ENCODE measurements at regions of chr13 and their contacts with region 1.

Region 1: DNA sequence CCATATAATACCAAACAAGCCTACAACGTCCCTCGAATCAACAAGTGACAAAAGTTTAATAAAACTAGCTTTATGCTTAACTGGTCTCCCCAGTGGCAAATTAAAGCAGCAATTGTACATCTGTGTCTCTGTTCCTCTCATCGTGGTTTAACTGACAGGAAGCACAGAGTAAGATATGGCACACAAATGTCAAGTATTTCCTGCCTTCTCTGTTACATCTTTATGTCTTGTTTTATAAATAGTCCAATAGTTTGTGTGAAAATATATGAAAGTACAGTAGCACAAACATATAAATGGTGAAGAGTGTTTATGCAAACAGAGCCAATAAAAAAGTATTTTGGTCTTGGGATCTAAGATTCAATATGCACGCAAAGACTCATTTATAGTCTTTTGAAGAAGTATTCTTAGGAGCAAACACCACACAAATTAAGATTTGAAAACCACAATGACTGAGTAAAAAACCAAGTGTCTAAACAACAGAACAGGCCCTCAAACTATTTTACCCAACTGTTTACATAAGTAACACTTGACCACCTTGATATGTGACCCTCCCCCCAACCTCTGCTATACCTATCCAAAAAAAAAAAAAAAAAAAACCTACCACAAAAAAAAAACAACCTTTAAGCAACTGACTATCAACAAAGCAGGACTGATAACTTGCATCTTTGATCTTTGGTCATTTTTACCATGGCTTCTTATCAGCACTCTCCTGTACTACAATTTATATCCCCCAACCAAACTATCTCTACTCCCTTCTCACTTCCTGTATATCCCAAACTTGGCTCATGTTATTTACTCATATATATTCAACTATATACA is 14.0 kb downstream of the ELF1 start:
- DNase-seq: peak; percentile 51
- ATAC-seq: peak; percentile 78
- H3K4me3 Mint-ChIP-seq: peak overlapping the region; percentile 52
- H3K27ac Mint-ChIP-seq: peak overlapping the region; percentile 96
- H3K4me1 Mint-ChIP-seq: peaks cover 69% of the 10 kb centered on the region
- H3K27me3 Mint-ChIP-seq: no peaks in the 10 kb centered on the region

Region 2: GRCh38 chr13:40798380-40798779 is 206.7 kb before region 1 on chr13:
- CTCF ChIA-PET with region 1: no interaction called
- DNase-seq: no peak
- ATAC-seq: peak; percentile 61
- H3K4me3 Mint-ChIP-seq: no peak overlapping the region
- H3K27ac Mint-ChIP-seq: peak overlapping the region; percentile 66
- H3K4me1 Mint-ChIP-seq: peaks cover 4% of the 10 kb centered on the region
- H3K27me3 Mint-ChIP-seq: no peaks in the 10 kb centered on the region

Region 3: GRCh38 chr13:40922437-40923040 is 82.5 kb before region 1 on chr13:
- CTCF ChIA-PET with region 1: no interaction called
- DNase-seq: no peak
- ATAC-seq: no peak
- H3K4me3 Mint-ChIP-seq: no peak overlapping the region
- H3K27ac Mint-ChIP-seq: peak overlapping the region; percentile 70
- H3K4me1 Mint-ChIP-seq: peaks cover 16% of the 10 kb centered on the region
- H3K27me3 Mint-ChIP-seq: no peaks in the 10 kb centered on the region

Region 4: GRCh38 chr13:40984668-40985366 is 20.3 kb before region 1 on chr13:
- CTCF ChIA-PET with region 1: interaction called, 12 read pairs
- DNase-seq: no peak
- ATAC-seq: peak; percentile 65
- H3K4me3 Mint-ChIP-seq: peak overlapping the region; percentile 96
- H3K27ac Mint-ChIP-seq: peak overlapping the region; percentile 93
- H3K4me1 Mint-ChIP-seq: peaks cover 46% of the 10 kb centered on the region
- H3K27me3 Mint-ChIP-seq: no peaks in the 10 kb centered on the region

Region 5: DNA sequence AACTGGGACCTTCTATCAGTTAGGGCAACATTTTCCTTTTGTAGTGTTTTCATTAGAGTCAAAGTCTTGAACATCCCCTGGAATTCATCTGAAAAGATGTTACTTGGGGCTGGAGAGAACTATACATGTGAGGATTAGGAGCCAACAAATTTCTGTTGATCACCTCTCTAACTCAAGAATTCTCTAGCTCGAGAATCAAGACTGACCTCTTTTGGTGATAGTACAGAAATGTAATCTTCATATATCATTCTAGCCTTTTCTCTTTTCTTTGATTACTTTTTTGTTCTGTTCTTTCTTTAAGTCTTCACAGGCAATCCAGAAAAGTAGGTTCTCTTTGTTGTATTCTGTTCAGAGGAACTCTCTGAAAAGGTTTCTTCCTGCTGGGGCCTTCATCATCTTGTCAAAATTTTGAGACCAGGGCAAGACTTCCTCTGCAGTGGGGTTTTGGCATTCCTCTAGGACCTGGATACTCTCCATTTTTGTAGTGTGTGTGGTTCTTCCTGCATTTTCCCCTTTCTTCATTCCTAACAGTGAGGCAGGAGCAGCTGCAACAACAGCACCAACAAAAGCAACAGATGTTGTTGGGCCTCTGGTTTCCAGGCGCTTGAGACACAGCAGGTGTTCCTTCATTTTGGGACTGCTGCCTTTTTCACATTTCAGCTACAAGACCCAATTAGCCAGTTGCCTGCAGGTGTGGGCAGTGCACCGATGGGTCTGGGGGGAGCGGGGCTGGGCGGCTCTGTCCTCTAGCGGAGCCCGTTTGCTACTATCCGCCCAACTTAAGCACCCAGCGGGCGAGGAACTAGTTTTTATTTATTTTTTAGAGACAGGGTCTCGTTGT is 12.2 kb before region 1 on chr13:
- CTCF ChIA-PET with region 1: interaction called, 13 read pairs
- DNase-seq: no peak
- ATAC-seq: peak; percentile 34
- H3K4me3 Mint-ChIP-seq: no peak overlapping the region
- H3K27ac Mint-ChIP-seq: peak overlapping the region; percentile 85
- H3K4me1 Mint-ChIP-seq: peaks cover 75% of the 10 kb centered on the region
- H3K27me3 Mint-ChIP-seq: no peaks in the 10 kb centered on the region

Region 6: GRCh38 chr13:41200126-41200525 is 195.0 kb after region 1 on chr13:
- CTCF ChIA-PET with region 1: no interaction called
- DNase-seq: no peak
- ATAC-seq: no peak
- H3K4me3 Mint-ChIP-seq: no peak overlapping the region
- H3K27ac Mint-ChIP-seq: no peak overlapping the region
- H3K4me1 Mint-ChIP-seq: peaks cover 14% of the 10 kb centered on the region
- H3K27me3 Mint-ChIP-seq: no peaks in the 10 kb centered on the region